ENCODE measurements at regions of chr19 and their contacts with region 1.

Region 1: GRCh38 chr19:45782820-45783785 is 813 bp upstream of the DMPK start:
- DNase-seq: peak; percentile 73 to 77
- H3K4me3 ChIP-seq: peak overlapping the region; percentile 51; the same call in 1 of the 2 replicates
- H3K27ac ChIP-seq: peak overlapping the region; percentile 81
- H3K4me1 ChIP-seq: peaks cover 55% of the 10 kb centered on the region
- H3K27me3 ChIP-seq: no peaks in the 10 kb centered on the region
- CTCF ChIP-seq: no peak; the same call in 1 of the 2 replicates

Region 2: GRCh38 chr19:45717166-45717982 is 65.7 kb before region 1 on chr19:
- CTCF ChIA-PET with region 1: no interaction called
- POLR2A ChIA-PET with region 1: interaction called, 16 read pairs
- intact Hi-C with region 1: no loop called
- DNase-seq: peak; percentile 99
- H3K4me3 ChIP-seq: peak overlapping the region; percentile 87
- H3K27ac ChIP-seq: peak overlapping the region; percentile 75
- H3K4me1 ChIP-seq: peaks cover 35% of the 10 kb centered on the region
- H3K27me3 ChIP-seq: no peaks in the 10 kb centered on the region
- CTCF ChIP-seq: no peak; the same call in 1 of the 2 replicates

Region 3: DNA sequence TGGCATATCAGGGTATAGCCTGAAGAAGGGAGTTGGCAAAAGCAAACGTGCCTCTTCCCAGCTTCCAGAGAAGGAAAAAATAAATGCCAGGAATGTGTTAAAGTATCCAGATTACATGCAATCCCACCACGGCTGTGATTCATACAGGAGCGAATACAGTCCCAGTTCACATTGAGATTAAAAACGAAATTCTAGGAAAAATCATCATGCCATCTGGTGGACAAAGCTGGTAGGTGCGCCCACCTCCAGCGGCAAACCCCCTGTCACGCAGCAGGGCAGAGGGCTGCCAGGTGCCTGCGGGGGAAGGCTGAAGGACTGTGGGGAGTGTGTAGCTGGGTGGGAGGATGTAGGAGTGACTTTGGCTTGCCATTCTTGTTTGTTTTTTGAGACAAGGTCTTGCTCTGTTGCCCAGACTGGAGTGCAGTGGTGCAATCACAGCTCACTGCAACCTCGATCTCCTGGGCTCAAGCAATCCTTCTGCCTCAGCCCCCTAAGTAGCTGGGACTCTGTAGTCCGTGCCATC is 16.0 kb after region 1 on chr19:
- CTCF ChIA-PET with region 1: interaction called, 13 read pairs
- POLR2A ChIA-PET with region 1: interaction called, 3 read pairs
- intact Hi-C with region 1: no loop called
- DNase-seq: peak; percentile 58 to 75
- H3K4me3 ChIP-seq: no peak overlapping the region
- H3K27ac ChIP-seq: 0 out of 2 replicates have a peak overlapping the region, but pooled peaks have one; percentile 1
- H3K4me1 ChIP-seq: peaks cover 13% of the 10 kb centered on the region
- H3K27me3 ChIP-seq: no peaks in the 10 kb centered on the region
- CTCF ChIP-seq: peak; percentile 95

Region 4: DNA sequence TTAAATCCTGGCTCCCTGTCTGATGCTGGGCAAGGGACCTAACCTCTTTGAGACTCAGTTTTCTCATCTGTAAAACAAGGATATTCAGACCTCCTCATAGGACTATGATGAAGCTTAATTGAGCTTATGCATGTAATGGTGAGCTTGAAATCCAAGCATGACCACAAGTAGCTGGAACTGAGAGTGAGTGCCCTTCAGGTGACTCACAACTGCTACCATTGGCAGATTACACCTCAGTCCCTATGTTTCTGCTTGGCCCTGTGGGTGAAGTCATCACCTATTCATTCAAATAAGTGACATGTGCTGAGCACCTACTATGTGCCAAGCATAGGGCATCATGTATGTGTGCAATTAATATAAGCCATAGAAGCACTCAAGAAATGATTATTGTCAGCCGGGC is 164.8 kb after region 1 on chr19:
- CTCF ChIA-PET with region 1: no interaction called
- POLR2A ChIA-PET with region 1: interaction called, 20 read pairs
- intact Hi-C with region 1: no loop called
- DNase-seq: peak in 1 of 2 experiments; percentile 49
- H3K4me3 ChIP-seq: no peak overlapping the region
- H3K27ac ChIP-seq: no peak overlapping the region
- H3K4me1 ChIP-seq: no peaks in the 10 kb centered on the region
- H3K27me3 ChIP-seq: peaks cover 44% of the 10 kb centered on the region
- CTCF ChIP-seq: no peak

Region 5: GRCh38 chr19:45994989-45995714 is 212.0 kb after region 1 on chr19 and contains the start of gene CCDC61:
- CTCF ChIA-PET with region 1: no interaction called
- POLR2A ChIA-PET with region 1: no interaction called
- intact Hi-C with region 1: no loop called
- DNase-seq: peak; percentile 96 to 99
- H3K4me3 ChIP-seq: peak within 1 kb of the TSS; percentile 77
- H3K27ac ChIP-seq: peak within 1 kb of the TSS; percentile 37
- H3K4me1 ChIP-seq: peaks cover 11% of the 10 kb centered on the region
- H3K27me3 ChIP-seq: no peaks in the 10 kb centered on the region
- CTCF ChIP-seq: no peak
- total RNA-seq, gene CCDC61: 22.8 and 24.8 TPM in 2 replicates

Region 6: GRCh38 chr19:46115396-46116106 is 332.4 kb after region 1 on chr19:
- CTCF ChIA-PET with region 1: no interaction called
- POLR2A ChIA-PET with region 1: interaction called, 10 read pairs
- intact Hi-C with region 1: no loop called
- DNase-seq: peak; percentile 57 to 87
- H3K4me3 ChIP-seq: no peak overlapping the region; the same call in 1 of the 2 replicates
- H3K27ac ChIP-seq: peak overlapping the region; percentile 70
- H3K4me1 ChIP-seq: peaks cover 46% of the 10 kb centered on the region
- H3K27me3 ChIP-seq: no peaks in the 10 kb centered on the region
- CTCF ChIP-seq: no peak

Region 7: GRCh38 chr19:46126086-46126580 is 343.0 kb after region 1 on chr19:
- CTCF ChIA-PET with region 1: no interaction called
- POLR2A ChIA-PET with region 1: no interaction called
- intact Hi-C with region 1: no loop called
- DNase-seq: no peak
- H3K4me3 ChIP-seq: no peak overlapping the region
- H3K27ac ChIP-seq: no peak overlapping the region
- H3K4me1 ChIP-seq: no peaks in the 10 kb centered on the region
- H3K27me3 ChIP-seq: no peaks in the 10 kb centered on the region
- CTCF ChIP-seq: no peak

Region 8: GRCh38 chr19:46529622-46530462 is 746.7 kb after region 1 on chr19:
- CTCF ChIA-PET with region 1: no interaction called
- POLR2A ChIA-PET with region 1: no interaction called
- intact Hi-C with region 1: no loop called
- DNase-seq: peak; percentile 42 to 64
- H3K4me3 ChIP-seq: no peak overlapping the region
- H3K27ac ChIP-seq: no peak overlapping the region
- H3K4me1 ChIP-seq: peaks cover 8% of the 10 kb centered on the region; the same call in 1 of the 2 replicates
- H3K27me3 ChIP-seq: 0 out of 2 replicates have a peak, but pooled peaks cover 4% of the 10 kb centered on the region
- CTCF ChIP-seq: peak; percentile 98

Measured in PC-9 (cell line).